CD14-positive monocyte (primary cell): ENCODE measurements at regions of chr9 and their contacts with region 1.

Region 1: DNA sequence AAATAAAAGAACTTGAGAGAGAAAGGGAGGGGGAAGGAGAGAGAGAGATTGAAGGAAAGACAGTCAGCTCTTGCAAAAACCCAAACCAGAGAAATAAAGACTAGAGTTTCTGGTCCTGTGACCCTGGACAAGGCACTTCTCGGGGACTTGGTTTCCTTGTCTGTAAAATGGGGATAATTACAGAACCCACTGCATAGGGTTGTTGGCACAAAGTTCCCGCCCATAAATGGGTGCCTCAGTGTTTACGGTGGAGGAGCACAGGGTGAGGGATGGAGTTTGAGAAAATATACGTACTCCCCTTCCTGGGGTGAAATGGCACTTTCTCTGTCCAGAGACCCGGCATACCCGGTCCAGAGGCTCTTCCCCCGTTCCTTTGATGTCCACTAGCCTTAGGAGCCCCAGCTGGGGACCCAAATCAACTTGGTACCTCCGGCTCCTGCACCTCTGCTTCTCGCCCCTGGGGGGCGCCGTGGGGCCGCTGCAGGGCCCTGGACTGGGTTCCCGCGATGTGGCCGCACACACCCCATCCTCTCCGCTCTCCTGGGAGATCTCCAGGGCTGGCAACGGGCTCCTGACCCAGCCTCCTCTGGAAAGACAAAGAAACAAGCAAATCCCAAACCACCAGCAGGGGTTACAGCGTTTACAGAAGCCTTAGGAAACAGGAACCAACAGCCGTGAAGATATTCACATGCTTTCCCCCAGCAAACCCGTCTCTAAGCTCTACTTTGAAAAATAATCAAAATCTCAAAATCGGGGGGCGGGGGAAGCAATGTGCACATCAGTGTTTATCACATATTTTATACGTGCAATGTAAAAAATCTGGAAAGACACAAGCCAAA is 26.3 kb downstream of the PTGES start:
- DNase-seq: peak; percentile 63 to 66 (median 65)
- H3K4me3 ChIP-seq: no peak overlapping the region
- H3K4me3 Mint-ChIP-seq: peak overlapping the region in 1 of 2 donors; percentile 46
- H3K27ac ChIP-seq: no peak overlapping the region
- H3K27ac Mint-ChIP-seq: peak overlapping the region in 2 of 7 donors; percentile 73 to 74
- H3K4me1 ChIP-seq: peaks cover 3 to 4% of the 10 kb centered on the region in 2 donors
- H3K4me1 Mint-ChIP-seq: peaks cover 3% of the 10 kb centered on the region
- H3K27me3 ChIP-seq: no peaks in the 10 kb centered on the region
- H3K27me3 Mint-ChIP-seq: peaks cover 12 to 22% (median 14%) of the 10 kb centered on the region in 3 donors
- CTCF ChIP-seq: peak; percentile 97

Region 2: DNA sequence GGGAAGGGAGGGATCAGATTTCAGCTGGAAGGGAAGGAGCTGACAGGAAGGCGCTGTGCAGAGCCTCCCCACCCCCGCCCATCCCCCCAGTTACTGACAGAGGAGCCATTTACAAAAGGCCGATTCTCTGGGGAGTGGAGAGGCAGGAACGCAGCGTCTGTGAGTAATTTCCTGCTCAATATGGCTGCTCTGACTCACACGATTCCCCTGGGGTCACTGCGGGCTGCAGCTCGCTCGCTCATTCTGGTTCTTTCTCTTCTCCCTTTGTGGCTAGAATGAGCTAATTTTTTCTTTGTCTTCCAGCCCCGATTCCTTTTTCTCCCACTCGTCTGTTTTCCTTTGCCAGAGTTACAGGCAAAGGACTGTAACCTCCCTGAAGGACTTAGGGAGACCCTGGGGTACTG is 586.5 kb before region 1 on chr9:
- intact Hi-C with region 1: loop called in 1 of 2 experiments (anchors 10 kb)
- DNase-seq: peak; percentile 94 to 98 (median 95)
- H3K4me3 ChIP-seq: peak overlapping the region; percentile 27 to 73 (median 32)
- H3K4me3 Mint-ChIP-seq: peak overlapping the region; percentile 79 to 92
- H3K27ac ChIP-seq: peak overlapping the region; percentile 97 to 99
- H3K27ac Mint-ChIP-seq: peak overlapping the region; percentile 96 to 98 (median 97)
- H3K4me1 ChIP-seq: peaks cover 37 to 47% of the 10 kb centered on the region in 2 donors
- H3K4me1 Mint-ChIP-seq: peaks cover 41% of the 10 kb centered on the region
- H3K27me3 ChIP-seq: no peaks in the 10 kb centered on the region
- H3K27me3 Mint-ChIP-seq: peaks cover 0 to 2% (median 0%) of the 10 kb centered on the region in 3 donors
- CTCF ChIP-seq: no peak

Region 3: GRCh38 chr9:129650680-129651235 is 75.8 kb before region 1 on chr9:
- intact Hi-C with region 1: loop called in 1 of 2 experiments (anchors 5 kb)
- DNase-seq: no peak
- H3K4me3 ChIP-seq: no peak overlapping the region
- H3K4me3 Mint-ChIP-seq: no peak overlapping the region
- H3K27ac ChIP-seq: no peak overlapping the region
- H3K27ac Mint-ChIP-seq: no peak overlapping the region
- H3K4me1 ChIP-seq: no peaks in the 10 kb centered on the region
- H3K4me1 Mint-ChIP-seq: no peaks in the 10 kb centered on the region
- H3K27me3 ChIP-seq: peaks cover 0 to 4% of the 10 kb centered on the region in 2 donors
- H3K27me3 Mint-ChIP-seq: peaks cover 4 to 21% (median 9%) of the 10 kb centered on the region in 3 donors
- CTCF ChIP-seq: no peak

Region 4: GRCh38 chr9:129783516-129784361 is 57.2 kb after region 1 on chr9:
- intact Hi-C with region 1: loop called in 1 of 2 experiments (anchors 2 kb)
- DNase-seq: peak; percentile 75 to 84 (median 82)
- H3K4me3 ChIP-seq: no peak overlapping the region
- H3K4me3 Mint-ChIP-seq: peak overlapping the region in 1 of 2 donors; percentile 43
- H3K27ac ChIP-seq: no peak overlapping the region
- H3K27ac Mint-ChIP-seq: peak overlapping the region in 6 of 7 donors; percentile 56 to 90 (median 70)
- H3K4me1 ChIP-seq: peaks cover 23 to 30% of the 10 kb centered on the region in 2 donors
- H3K4me1 Mint-ChIP-seq: peaks cover 33% of the 10 kb centered on the region
- H3K27me3 ChIP-seq: no peaks in the 10 kb centered on the region
- H3K27me3 Mint-ChIP-seq: peaks cover 17 to 31% (median 17%) of the 10 kb centered on the region in 3 donors
- CTCF ChIP-seq: peak; percentile 88

Region 5: GRCh38 chr9:129796029-129796910 is 69.7 kb after region 1 on chr9:
- intact Hi-C with region 1: loop called in 1 of 2 experiments (anchors 2 kb)
- DNase-seq: no peak
- H3K4me3 ChIP-seq: no peak overlapping the region
- H3K4me3 Mint-ChIP-seq: no peak overlapping the region
- H3K27ac ChIP-seq: no peak overlapping the region
- H3K27ac Mint-ChIP-seq: no peak overlapping the region
- H3K4me1 ChIP-seq: no peaks in the 10 kb centered on the region
- H3K4me1 Mint-ChIP-seq: no peaks in the 10 kb centered on the region
- H3K27me3 ChIP-seq: no peaks in the 10 kb centered on the region
- H3K27me3 Mint-ChIP-seq: peaks cover 14 to 18% (median 17%) of the 10 kb centered on the region in 3 donors
- CTCF ChIP-seq: no peak

Region 6: DNA sequence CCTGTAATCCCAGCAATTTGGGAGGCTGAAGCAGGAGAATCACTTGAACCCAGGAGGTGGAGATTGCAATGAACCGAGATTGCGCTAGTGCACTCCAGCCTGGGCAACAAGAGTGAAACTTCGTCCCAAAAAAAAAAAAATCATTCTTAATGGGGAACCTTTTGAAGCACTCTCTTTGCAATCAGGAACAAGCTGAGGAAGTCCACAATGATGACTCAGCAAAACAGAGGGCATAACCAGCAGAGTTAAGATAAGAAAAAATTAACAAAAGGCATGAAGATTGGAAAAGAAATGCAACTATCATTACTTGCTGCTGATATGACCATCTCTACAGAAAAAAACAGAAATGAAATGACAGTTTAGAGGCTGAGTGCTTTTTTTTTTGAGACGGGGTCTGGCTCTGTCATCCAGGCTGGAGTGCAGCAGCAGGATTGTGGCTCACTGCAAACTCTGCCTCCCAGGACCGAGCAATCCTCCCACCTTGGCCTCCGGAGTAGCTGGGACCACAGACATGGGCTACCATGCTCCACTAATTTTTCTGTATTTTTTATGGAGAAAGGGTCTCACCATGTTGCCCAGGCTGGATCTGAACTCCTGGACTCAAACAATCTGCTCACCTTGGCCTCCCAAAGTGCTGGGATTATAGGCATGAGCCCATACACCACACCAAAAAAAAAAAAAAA is 228.5 kb after region 1 on chr9:
- intact Hi-C with region 1: no loop called
- DNase-seq: peak; percentile 72 to 86 (median 82)
- H3K4me3 ChIP-seq: peak overlapping the region in 1 of 3 experiments; percentile 55
- H3K4me3 Mint-ChIP-seq: peak overlapping the region; percentile 69 to 74
- H3K27ac ChIP-seq: peak overlapping the region; percentile 73 to 79
- H3K27ac Mint-ChIP-seq: peak overlapping the region; percentile 86 to 96 (median 92)
- H3K4me1 ChIP-seq: peaks cover 42 to 56% of the 10 kb centered on the region in 2 donors
- H3K4me1 Mint-ChIP-seq: peaks cover 44% of the 10 kb centered on the region
- H3K27me3 ChIP-seq: no peaks in the 10 kb centered on the region
- H3K27me3 Mint-ChIP-seq: peaks cover 0 to 2% (median 0%) of the 10 kb centered on the region in 3 donors
- CTCF ChIP-seq: no peak

Region 7: DNA sequence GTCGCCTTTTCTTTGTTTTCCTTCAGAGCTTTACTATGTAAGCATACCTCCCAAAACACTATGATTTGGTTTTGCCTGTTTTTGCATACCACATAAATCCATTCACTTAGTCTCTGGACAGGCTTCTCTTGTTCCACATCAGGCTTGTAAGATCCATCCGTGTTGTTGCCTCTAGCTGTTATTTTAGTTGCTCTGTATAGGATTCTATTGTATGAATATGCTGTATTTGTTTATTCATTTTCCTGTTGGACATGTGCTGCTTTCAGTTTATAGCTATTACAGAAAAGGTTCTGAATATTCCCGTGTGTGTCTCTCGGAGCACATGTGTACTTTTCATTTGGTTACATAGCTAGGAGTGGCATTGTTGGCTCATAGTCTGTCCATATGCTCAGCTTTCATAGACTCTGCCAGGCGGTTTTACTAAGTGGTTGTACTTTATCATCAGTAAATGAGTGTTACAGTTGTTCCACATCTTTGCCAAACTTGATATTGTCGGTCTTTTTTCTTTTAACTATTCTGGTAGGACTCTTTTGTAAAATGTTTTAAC is 1440.7 kb after region 1 on chr9:
- intact Hi-C with region 1: no loop called
- DNase-seq: no peak
- H3K4me3 ChIP-seq: no peak overlapping the region
- H3K4me3 Mint-ChIP-seq: no peak overlapping the region
- H3K27ac ChIP-seq: no peak overlapping the region
- H3K27ac Mint-ChIP-seq: no peak overlapping the region
- H3K4me1 ChIP-seq: no peaks in the 10 kb centered on the region
- H3K4me1 Mint-ChIP-seq: no peaks in the 10 kb centered on the region
- H3K27me3 ChIP-seq: no peaks in the 10 kb centered on the region
- H3K27me3 Mint-ChIP-seq: no peaks in the 10 kb centered on the region
- CTCF ChIP-seq: no peak